IMR-90 (cell line): ENCODE measurements at regions of chr12 and their contacts with region 1.

Region 1: GRCh38 chr12:66247741-66248140 is 54.6 kb upstream of the HELB start:
- DNase-seq: no peak
- ATAC-seq: no peak
- H3K4me3 ChIP-seq: no peak overlapping the region
- H3K27ac ChIP-seq: no peak overlapping the region
- H3K4me1 ChIP-seq: no peaks in the 10 kb centered on the region
- H3K27me3 ChIP-seq: no peaks in the 10 kb centered on the region; the same call in 1 of the 2 replicates
- CTCF ChIP-seq: no peak
- POLR2A ChIP-seq: no peak
- RAD21 ChIP-seq: no peak

Region 2: DNA sequence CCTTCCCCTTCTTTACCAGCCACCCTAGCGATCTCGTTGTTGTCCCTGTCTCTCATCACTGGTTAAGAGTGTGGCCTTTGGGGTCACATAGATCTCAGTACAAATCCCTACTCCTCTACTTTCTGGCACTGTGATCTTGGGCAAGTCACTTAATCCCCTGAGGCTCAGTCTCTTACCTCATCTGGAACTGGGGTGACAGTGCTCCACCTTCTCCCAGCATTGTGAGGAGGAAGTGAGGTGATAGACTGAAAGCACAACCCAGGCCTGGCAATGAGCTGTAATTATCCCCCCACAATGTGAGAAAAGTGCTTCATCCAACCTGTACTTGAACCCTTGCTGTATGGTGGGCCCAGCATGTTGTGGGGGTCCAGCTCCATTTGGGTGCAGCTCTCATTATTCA is 10.8 kb before region 1 on chr12:
- CTCF ChIA-PET with region 1: interaction called, 10 read pairs
- POLR2A ChIA-PET with region 1: no interaction called
- dilution Hi-C with region 1: no loop called
- in situ Hi-C with region 1: no loop called
- intact Hi-C with region 1: no loop called
- DNase-seq: no peak
- ATAC-seq: no peak
- H3K4me3 ChIP-seq: no peak overlapping the region
- H3K27ac ChIP-seq: no peak overlapping the region
- H3K4me1 ChIP-seq: peaks cover 2% of the 10 kb centered on the region; the same call in 1 of the 2 replicates
- H3K27me3 ChIP-seq: peaks cover 3% of the 10 kb centered on the region
- CTCF ChIP-seq: no peak
- POLR2A ChIP-seq: no peak
- RAD21 ChIP-seq: no peak

Region 3: DNA sequence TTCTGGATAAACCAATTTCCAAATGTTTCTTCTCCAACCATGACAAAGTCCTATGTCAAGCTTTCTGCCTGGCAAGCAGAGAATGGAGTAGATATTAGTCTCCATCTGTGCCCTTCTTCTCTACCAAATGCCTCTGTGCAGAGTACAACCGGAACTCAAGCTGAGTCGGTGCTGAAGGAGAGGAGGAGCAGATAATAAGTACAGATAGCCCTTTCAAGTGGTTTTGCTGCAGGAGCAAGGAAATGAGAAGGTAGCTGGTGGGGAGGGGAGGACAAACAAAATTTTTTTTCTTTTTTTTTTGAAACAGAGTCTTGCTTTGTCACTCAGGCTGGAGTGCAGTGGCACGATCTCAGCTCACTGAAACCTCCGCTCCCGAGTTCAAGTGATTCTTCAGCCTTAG is 40.4 kb after region 1 on chr12:
- CTCF ChIA-PET with region 1: no interaction called
- POLR2A ChIA-PET with region 1: no interaction called
- dilution Hi-C with region 1: no loop called
- in situ Hi-C with region 1: no loop called
- intact Hi-C with region 1: loop called (anchors 2 kb)
- DNase-seq: no peak
- ATAC-seq: no peak
- H3K4me3 ChIP-seq: no peak overlapping the region
- H3K27ac ChIP-seq: no peak overlapping the region
- H3K4me1 ChIP-seq: no peaks in the 10 kb centered on the region
- H3K27me3 ChIP-seq: peaks cover 12% of the 10 kb centered on the region
- CTCF ChIP-seq: no peak
- POLR2A ChIP-seq: no peak
- RAD21 ChIP-seq: no peak

Region 4: DNA sequence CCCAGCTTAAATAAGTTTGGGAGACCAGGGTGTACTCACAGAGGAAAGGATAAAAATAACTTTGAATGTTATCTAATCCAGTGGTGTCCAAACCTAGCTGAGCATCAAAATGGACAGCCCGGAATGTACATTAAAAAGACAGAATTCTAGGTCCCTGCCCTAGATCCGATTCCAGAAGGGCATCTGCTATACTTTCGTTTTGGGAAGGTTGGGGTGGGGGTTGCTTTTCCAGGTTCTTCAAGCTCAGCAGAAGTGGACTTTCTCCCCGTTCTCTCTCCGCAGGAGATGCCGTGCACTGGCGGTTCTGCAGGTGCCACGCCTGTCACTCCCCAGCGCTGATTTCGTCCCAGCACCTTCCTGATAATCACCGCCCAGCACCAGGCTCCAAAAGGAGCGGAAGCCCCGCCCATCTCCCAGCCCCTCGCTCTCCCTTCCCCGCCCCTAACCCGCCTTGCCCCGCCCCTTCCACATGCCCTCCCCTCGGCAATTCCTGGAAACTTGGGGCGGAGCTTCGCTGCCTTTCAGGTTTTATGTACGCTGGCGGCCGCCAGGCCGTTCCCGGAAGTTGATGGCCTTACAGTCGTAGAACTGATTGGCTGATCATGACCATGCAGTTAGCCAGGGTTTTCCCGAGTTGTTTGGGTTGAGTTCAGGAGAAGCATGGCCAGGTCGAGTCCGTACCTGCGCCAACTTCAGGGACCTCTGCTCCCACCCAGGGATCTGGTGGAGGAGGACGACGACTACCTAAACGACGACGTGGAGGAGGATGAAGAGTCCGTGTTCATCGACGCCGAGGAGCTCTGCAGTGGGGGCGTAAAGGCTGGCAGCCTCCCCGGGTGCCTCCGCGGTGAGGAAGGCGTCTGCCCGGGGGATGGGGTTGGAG is 54.4 kb after region 1 on chr12 and contains the start of gene HELB:
- CTCF ChIA-PET with region 1: no interaction called
- POLR2A ChIA-PET with region 1: no interaction called
- dilution Hi-C with region 1: no loop called
- in situ Hi-C with region 1: no loop called
- intact Hi-C with region 1: no loop called
- DNase-seq: peak; percentile 95
- ATAC-seq: peak; percentile 98
- H3K4me3 ChIP-seq: peak within 1 kb of the TSS; percentile 92
- H3K27ac ChIP-seq: peak within 1 kb of the TSS; percentile 72
- H3K4me1 ChIP-seq: no peaks in the 10 kb centered on the region
- H3K27me3 ChIP-seq: peaks cover 3% of the 10 kb centered on the region
- CTCF ChIP-seq: no peak
- POLR2A ChIP-seq: no peak
- RAD21 ChIP-seq: no peak
- total RNA-seq, gene HELB: 2.9 and 3.6 TPM in 2 replicates